Mammary epithelial cell (primary cell): ENCODE measurements at regions of chr1 and their contacts with region 1.

Region 1: DNA sequence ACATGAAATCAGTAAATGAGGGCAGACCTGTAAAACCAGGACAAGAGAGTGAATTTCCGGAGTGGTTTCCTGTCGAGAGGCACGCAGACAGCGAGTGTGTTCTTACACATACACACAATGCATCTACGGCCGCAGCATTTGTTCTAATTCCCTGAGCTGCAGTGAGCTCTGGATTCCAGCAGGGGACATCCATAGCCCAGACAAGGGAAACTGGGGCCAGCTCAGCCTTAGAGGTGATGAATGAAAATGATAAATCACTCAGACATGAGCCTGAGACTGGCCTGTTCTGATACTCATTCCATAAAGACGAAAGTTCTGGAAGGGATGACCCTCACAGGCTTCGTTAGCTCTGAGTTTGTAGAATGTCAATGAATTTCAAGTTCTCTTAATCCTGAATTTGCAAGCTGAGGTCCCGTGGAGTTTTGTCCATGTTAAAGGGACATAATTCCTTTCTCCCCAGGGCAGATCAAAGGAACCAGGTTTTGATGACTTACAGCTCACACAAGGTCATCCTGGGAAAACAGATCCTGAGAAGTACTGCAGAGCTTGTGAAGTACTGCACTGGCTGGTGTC is 207.9 kb upstream of the C1orf87 start:
- DNase-seq: peak; percentile 55
- H3K4me3 ChIP-seq: no peak overlapping the region
- H3K27ac ChIP-seq: no peak overlapping the region
- H3K4me1 ChIP-seq: peaks cover 2% of the 10 kb centered on the region
- H3K27me3 ChIP-seq: no peaks in the 10 kb centered on the region
- CTCF ChIP-seq: peak; percentile 94 to 98

Region 2: DNA sequence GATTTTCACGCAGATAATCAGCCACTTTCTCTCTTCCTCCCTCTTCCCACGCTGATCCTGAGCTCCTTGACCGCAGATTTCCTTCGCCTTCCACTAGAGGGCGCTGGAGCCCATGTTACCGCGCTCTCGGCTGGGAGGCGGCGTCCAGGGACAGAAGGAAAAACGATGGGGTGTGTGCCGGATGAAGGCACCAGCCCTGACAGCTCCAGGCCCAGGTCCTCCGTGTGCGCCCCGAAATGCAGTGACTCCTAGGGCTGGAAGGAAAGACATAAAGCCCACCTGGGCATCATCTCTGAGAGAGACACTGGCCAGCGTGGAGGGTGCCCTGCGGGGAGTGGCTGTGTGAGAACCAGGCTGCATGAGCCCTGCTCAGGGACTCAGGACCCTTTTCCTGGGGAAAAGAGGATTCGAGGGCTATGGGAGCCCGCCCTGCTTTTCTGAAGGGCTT is 310.0 kb before region 1 on chr1:
- CTCF ChIA-PET with region 1: interaction called, 5 read pairs
- dilution Hi-C with region 1: no loop called
- in situ Hi-C with region 1: no loop called
- intact Hi-C with region 1: loop called (anchors 10 kb)
- DNase-seq: peak; percentile 55
- H3K4me3 ChIP-seq: no peak overlapping the region
- H3K27ac ChIP-seq: no peak overlapping the region
- H3K4me1 ChIP-seq: no peaks in the 10 kb centered on the region
- H3K27me3 ChIP-seq: peaks cover 7% of the 10 kb centered on the region
- CTCF ChIP-seq: peak; percentile 83 to 93

Region 3: DNA sequence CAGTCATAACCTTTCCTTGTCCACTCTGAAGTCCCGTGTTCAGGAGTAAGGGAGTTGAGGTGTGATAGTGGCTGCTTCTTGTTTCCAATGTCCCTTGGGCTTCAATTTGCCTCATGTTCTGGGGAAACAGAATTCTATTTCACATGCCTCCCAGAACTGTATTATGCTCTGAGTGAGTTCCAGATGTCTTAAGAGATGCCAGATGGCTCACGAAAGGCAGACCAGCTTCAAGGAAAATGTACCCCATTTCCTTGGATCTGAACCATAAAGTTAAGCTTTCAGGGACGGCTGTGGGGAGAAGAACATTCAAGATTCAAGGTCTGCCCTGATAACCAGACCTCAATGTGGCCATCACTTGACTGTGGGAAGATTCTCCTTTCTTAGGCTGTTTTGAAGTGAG is 250.3 kb before region 1 on chr1:
- CTCF ChIA-PET with region 1: no interaction called
- dilution Hi-C with region 1: no loop called
- in situ Hi-C with region 1: no loop called
- intact Hi-C with region 1: no loop called
- DNase-seq: no peak
- H3K4me3 ChIP-seq: no peak overlapping the region
- H3K27ac ChIP-seq: no peak overlapping the region
- H3K4me1 ChIP-seq: no peaks in the 10 kb centered on the region
- H3K27me3 ChIP-seq: peaks cover 3% of the 10 kb centered on the region
- CTCF ChIP-seq: no peak

Region 4: GRCh38 chr1:60073605-60074278 is 207.7 kb before region 1 on chr1 and contains the start of gene C1orf87:
- CTCF ChIA-PET with region 1: no interaction called
- dilution Hi-C with region 1: no loop called
- in situ Hi-C with region 1: no loop called
- intact Hi-C with region 1: no loop called
- DNase-seq: no peak
- H3K4me3 ChIP-seq: no peak within 1 kb of the TSS
- H3K27ac ChIP-seq: no peak within 1 kb of the TSS
- H3K4me1 ChIP-seq: no peaks in the 10 kb centered on the region
- H3K27me3 ChIP-seq: peaks cover 16% of the 10 kb centered on the region
- CTCF ChIP-seq: no peak
- total RNA-seq, gene C1orf87: not detected

Region 5: DNA sequence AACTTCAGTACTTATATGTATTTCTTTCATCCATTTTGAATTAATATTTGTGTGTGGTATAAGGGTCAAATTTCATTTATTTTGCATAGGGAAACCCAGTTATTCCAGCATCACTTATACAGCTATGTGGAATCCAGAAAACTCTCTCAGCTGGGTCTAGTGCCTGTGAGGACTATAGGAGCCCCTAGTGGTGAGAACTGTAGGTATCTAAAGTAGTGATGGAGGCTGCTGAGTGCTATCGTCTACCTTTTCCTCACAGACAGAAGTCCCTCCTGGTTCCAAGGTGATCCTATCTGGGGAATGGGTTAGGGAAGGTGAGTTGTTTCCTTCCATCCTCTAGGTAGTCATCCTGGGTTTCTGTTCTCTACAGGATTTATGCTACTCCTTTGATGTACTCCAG is 144.1 kb after region 1 on chr1:
- CTCF ChIA-PET with region 1: interaction called, 9 read pairs
- dilution Hi-C with region 1: no loop called
- in situ Hi-C with region 1: no loop called
- intact Hi-C with region 1: loop called (anchors 2 kb)
- DNase-seq: no peak
- H3K4me3 ChIP-seq: no peak overlapping the region
- H3K27ac ChIP-seq: no peak overlapping the region
- H3K4me1 ChIP-seq: no peaks in the 10 kb centered on the region
- H3K27me3 ChIP-seq: no peaks in the 10 kb centered on the region
- CTCF ChIP-seq: peak; percentile 28 to 49

Region 6: DNA sequence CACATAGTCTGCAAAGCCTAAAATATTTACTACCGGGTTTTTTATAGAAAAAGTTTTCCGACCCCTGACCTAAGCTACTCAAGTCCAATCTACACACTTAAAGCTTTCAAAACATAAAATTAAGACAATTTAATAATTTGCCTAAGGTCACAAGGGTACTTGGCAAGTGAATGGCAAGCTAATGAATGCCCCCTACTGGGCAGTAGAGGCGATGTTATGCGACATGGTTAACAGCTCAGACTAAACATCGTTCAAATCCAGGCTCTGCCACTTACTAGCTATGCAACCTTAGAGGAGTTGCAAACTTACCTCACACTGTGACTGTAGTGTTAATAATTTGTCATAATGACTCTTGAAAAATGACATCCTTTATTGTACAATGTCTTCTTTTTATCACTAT is 483.8 kb after region 1 on chr1:
- CTCF ChIA-PET with region 1: interaction called, 7 read pairs
- dilution Hi-C with region 1: no loop called
- in situ Hi-C with region 1: no loop called
- intact Hi-C with region 1: loop called (anchors 1 kb)
- DNase-seq: peak; percentile 24
- H3K4me3 ChIP-seq: no peak overlapping the region
- H3K27ac ChIP-seq: no peak overlapping the region
- H3K4me1 ChIP-seq: no peaks in the 10 kb centered on the region
- H3K27me3 ChIP-seq: no peaks in the 10 kb centered on the region
- CTCF ChIP-seq: peak; percentile 58 to 78

Region 7: DNA sequence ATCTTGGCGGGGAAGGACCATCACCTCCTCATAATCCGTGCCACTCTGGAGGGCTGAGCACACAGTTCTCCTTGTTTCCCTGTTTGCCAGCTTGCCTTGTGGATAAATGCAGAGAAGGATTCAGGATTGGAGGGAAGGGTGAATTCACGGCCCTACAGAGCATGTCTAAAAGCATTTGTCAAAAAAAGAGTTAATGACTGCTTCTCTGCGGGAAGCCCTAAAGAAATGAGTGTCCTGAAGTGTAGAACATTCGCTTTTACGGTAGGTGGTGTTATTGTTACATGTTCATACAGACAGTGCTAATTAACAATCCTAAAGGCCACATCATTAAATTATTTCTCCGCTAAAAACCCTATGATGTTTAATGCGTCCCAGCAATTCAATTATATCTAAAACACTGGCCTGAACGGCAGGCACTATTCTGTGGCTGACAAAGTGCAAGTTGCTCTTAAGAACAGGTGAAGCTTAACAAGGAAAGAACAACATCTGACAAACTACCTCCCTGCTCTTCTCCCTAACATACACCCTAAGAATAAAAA is 688.6 kb after region 1 on chr1:
- CTCF ChIA-PET with region 1: no interaction called
- dilution Hi-C with region 1: no loop called
- in situ Hi-C with region 1: no loop called
- intact Hi-C with region 1: loop called (anchors 2 kb)
- DNase-seq: peak; percentile 46
- H3K4me3 ChIP-seq: no peak overlapping the region
- H3K27ac ChIP-seq: no peak overlapping the region
- H3K4me1 ChIP-seq: peaks cover 33% of the 10 kb centered on the region
- H3K27me3 ChIP-seq: no peaks in the 10 kb centered on the region
- CTCF ChIP-seq: peak; percentile 47 to 52

Region 8: GRCh38 chr1:61588736-61589672 is 1307.6 kb after region 1 on chr1:
- CTCF ChIA-PET with region 1: no interaction called
- dilution Hi-C with region 1: no loop called
- in situ Hi-C with region 1: no loop called
- intact Hi-C with region 1: loop called (anchors 5 kb)
- DNase-seq: peak; percentile 63
- H3K4me3 ChIP-seq: no peak overlapping the region
- H3K27ac ChIP-seq: no peak overlapping the region
- H3K4me1 ChIP-seq: peaks cover 11% of the 10 kb centered on the region
- H3K27me3 ChIP-seq: no peaks in the 10 kb centered on the region
- CTCF ChIP-seq: peak; percentile 91 to 92